Ascending aorta (tissue), 2 donors: ENCODE measurements at regions of chr15 and their contacts with region 1.

Region 1: GRCh38 chr15:25693321-25694237 is 169.5 kb downstream of the ATP10A start:
- DNase-seq: peak in 1 of 2 donors; percentile 73
- H3K4me3 ChIP-seq: no peak overlapping the region
- H3K27ac ChIP-seq: peak overlapping the region; percentile 47 to 59
- H3K4me1 ChIP-seq: peaks cover 0 to 20% of the 10 kb centered on the region in 2 donors
- H3K27me3 ChIP-seq: no peaks in the 10 kb centered on the region
- CTCF ChIP-seq: peak; percentile 50 to 68 (median 62)

Region 2: GRCh38 chr15:25933456-25934158 is 240.0 kb after region 1 on chr15:
- intact Hi-C with region 1: loop called (anchors 2 kb)
- DNase-seq: peak in 1 of 2 donors; percentile 88
- H3K4me3 ChIP-seq: peak overlapping the region; percentile 31 to 53
- H3K27ac ChIP-seq: peak overlapping the region in 1 of 2 donors; percentile 22
- H3K4me1 ChIP-seq: peaks cover 0 to 17% of the 10 kb centered on the region in 2 donors
- H3K27me3 ChIP-seq: no peaks in the 10 kb centered on the region
- CTCF ChIP-seq: peak; percentile 61 to 76 (median 71)

Region 3: GRCh38 chr15:26075770-26076169 is 382.2 kb after region 1 on chr15:
- intact Hi-C with region 1: loop called (anchors 5 kb)
- DNase-seq: no peak
- H3K4me3 ChIP-seq: no peak overlapping the region
- H3K27ac ChIP-seq: no peak overlapping the region
- H3K4me1 ChIP-seq: no peaks in the 10 kb centered on the region
- H3K27me3 ChIP-seq: no peaks in the 10 kb centered on the region
- CTCF ChIP-seq: no peak

Region 4: GRCh38 chr15:26260517-26261133 is 567.0 kb after region 1 on chr15:
- intact Hi-C with region 1: loop called (anchors 10 kb)
- DNase-seq: no peak
- H3K4me3 ChIP-seq: no peak overlapping the region
- H3K27ac ChIP-seq: no peak overlapping the region
- H3K4me1 ChIP-seq: no peaks in the 10 kb centered on the region
- H3K27me3 ChIP-seq: no peaks in the 10 kb centered on the region
- CTCF ChIP-seq: peak; percentile 50 to 76 (median 68)